ENCODE measurements at regions of chr16 and their contacts with region 1.

Region 1: GRCh38 chr16:1782352-1783091 is at the starts of genes NUBP2 and SPSB3:
- DNase-seq: peak; percentile 100
- H3K4me3 Mint-ChIP-seq: peak within 1 kb of the TSS; percentile 88
- H3K27ac Mint-ChIP-seq: peak within 1 kb of the TSS; percentile 78
- H3K4me1 Mint-ChIP-seq: peaks cover 9% of the 10 kb centered on the region
- H3K27me3 Mint-ChIP-seq: no peaks in the 10 kb centered on the region
- CTCF ChIP-seq: no peak
- total RNA-seq, gene NUBP2: 71.3 and 73.9 TPM in 2 replicates
- total RNA-seq, gene SPSB3: 21.6 and 22.2 TPM in 2 replicates

Region 2: DNA sequence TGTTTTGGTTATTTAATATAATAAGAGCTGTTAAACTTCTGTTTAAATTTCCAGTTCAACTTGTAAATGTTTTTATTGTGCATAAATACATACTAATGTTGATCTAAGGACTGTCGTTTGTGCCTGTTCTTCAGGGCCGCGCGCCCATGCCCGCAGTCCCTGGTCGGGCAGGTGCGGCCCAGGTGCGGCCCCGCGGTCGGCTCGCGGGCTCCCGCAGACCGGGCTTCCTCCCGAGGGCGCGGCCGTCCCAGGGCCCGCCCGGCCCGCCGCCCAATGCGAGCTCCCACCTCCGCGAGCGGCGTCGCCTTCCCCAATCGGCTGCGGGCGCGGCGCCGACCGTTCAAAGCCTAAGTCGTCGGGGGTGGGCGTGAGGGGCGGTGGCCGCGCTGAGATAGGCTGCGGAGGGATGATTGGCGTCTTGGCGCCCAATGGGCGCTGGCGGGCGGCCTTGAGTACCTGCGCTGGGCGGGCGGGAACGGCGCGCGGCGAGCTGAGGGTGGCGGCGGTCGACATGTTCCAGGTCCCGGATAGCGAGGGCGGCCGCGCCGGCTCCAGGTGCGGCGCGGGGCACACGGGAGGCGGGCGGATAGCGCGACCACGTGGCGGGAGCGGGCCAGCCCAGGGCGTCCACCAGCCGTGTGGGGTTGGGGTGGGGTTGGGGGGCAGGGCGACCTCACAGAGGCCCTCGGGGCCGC is 104.6 kb before region 1 on chr16 and contains the start of gene JPT2:
- CTCF ChIA-PET with region 1: no interaction called
- POLR2A ChIA-PET with region 1: interaction called, 22 read pairs
- intact Hi-C with region 1: no loop called
- DNase-seq: peak; percentile 98
- H3K4me3 Mint-ChIP-seq: peak within 1 kb of the TSS; percentile 94
- H3K27ac Mint-ChIP-seq: peak within 1 kb of the TSS; percentile 80
- H3K4me1 Mint-ChIP-seq: peaks cover 26% of the 10 kb centered on the region
- H3K27me3 Mint-ChIP-seq: no peaks in the 10 kb centered on the region
- CTCF ChIP-seq: no peak
- total RNA-seq, gene JPT2: 111 and 131 TPM in 2 replicates

Region 3: GRCh38 chr16:1705688-1706385 is 76.7 kb before region 1 on chr16 and contains the start of gene MAPK8IP3:
- CTCF ChIA-PET with region 1: interaction called, 3 read pairs
- POLR2A ChIA-PET with region 1: interaction called, 23 read pairs
- intact Hi-C with region 1: no loop called
- DNase-seq: peak; percentile 85
- H3K4me3 Mint-ChIP-seq: peak within 1 kb of the TSS; percentile 83
- H3K27ac Mint-ChIP-seq: peak within 1 kb of the TSS; percentile 87
- H3K4me1 Mint-ChIP-seq: peaks cover 18% of the 10 kb centered on the region
- H3K27me3 Mint-ChIP-seq: no peaks in the 10 kb centered on the region
- CTCF ChIP-seq: peak; percentile 90
- total RNA-seq, gene MAPK8IP3: 77.4 and 86.6 TPM in 2 replicates

Region 4: DNA sequence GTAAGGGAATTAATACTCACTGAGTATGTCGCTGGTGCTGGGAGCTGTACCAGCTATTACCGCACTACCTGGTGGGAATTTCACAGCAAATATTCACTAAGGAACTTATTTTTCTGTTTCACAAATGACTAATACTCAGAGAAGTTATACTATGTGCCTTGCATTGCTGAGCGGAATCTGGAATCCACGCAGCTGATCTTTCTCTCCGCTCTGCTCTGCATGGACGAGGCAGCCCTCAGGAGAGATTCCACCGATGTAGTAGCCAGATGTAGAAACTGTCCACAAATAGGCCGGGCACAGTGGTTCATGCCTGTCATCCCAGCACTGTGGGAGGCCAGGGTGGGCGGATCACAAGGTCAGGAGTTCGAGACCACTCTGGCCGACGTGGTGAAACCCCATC is 28.3 kb before region 1 on chr16:
- CTCF ChIA-PET with region 1: no interaction called
- POLR2A ChIA-PET with region 1: interaction called, 21 read pairs
- intact Hi-C with region 1: no loop called
- DNase-seq: no peak
- H3K4me3 Mint-ChIP-seq: no peak overlapping the region
- H3K27ac Mint-ChIP-seq: peak overlapping the region; percentile 64
- H3K4me1 Mint-ChIP-seq: peaks cover 12% of the 10 kb centered on the region
- H3K27me3 Mint-ChIP-seq: no peaks in the 10 kb centered on the region
- CTCF ChIP-seq: no peak

Region 5: DNA sequence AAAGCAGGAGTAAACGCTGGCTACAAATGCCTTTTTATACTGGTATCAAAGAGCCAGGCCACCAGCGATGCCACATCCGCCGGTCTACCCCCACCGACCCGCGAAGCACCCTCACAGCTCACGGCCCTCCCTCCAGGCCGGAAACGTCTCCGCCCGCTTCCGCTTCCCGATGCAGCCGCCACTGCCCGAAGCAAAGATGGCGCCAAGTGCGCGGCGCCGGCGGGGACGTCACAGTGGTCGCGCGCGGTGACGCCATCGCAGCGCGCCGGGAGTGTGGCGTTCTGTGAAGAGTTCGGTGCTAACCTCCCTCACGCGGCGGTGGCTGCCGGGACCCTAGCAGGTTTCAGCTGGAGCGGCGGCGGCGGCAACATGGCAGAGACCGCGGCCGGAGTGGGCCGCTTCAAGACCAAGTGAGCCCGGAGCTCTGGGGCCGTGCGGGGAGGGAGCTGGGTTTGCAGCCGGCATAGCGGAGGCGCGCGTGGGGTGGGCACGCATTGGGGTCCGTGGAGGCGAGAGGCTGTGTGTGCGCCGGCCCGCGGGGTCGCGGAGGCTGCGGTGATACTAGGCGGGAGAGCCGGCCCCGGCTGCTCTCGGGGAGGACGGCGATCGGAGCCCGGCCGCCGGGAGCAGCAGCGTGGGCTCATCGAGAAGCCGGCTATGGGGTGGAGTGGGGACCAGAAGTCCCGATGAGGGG is 189.4 kb after region 1 on chr16 and contains the start of gene TBL3:
- CTCF ChIA-PET with region 1: no interaction called
- POLR2A ChIA-PET with region 1: interaction called, 14 read pairs
- intact Hi-C with region 1: no loop called
- DNase-seq: peak; percentile 92
- H3K4me3 Mint-ChIP-seq: peak within 1 kb of the TSS; percentile 92
- H3K27ac Mint-ChIP-seq: peak within 1 kb of the TSS; percentile 95
- H3K4me1 Mint-ChIP-seq: peaks cover 13% of the 10 kb centered on the region
- H3K27me3 Mint-ChIP-seq: no peaks in the 10 kb centered on the region
- CTCF ChIP-seq: no peak
- total RNA-seq, gene TBL3: 25.8 and 26.8 TPM in 2 replicates

Region 6: GRCh38 chr16:2033057-2033908 is 250.8 kb after region 1 on chr16:
- CTCF ChIA-PET with region 1: no interaction called
- POLR2A ChIA-PET with region 1: no interaction called
- intact Hi-C with region 1: no loop called
- DNase-seq: no peak
- H3K4me3 Mint-ChIP-seq: no peak overlapping the region
- H3K27ac Mint-ChIP-seq: no peak overlapping the region
- H3K4me1 Mint-ChIP-seq: no peaks in the 10 kb centered on the region
- H3K27me3 Mint-ChIP-seq: no peaks in the 10 kb centered on the region
- CTCF ChIP-seq: no peak

Measured in MCF 10A (cell line).